Activated CD4-positive, alpha-beta T cell treated with anti-CD3 and anti-CD28 coated beads for 36 hours (primary cell): ENCODE measurements at regions of chr16 and their contacts with region 1.

Region 1: GRCh38 chr16:84738255-84739038 is 38.6 kb downstream of the USP10 start:
- DNase-seq: peak; percentile 85
- ATAC-seq: peak; percentile 79
- H3K4me3 Mint-ChIP-seq: no peak overlapping the region
- H3K27ac Mint-ChIP-seq: peak overlapping the region; percentile 42
- H3K4me1 Mint-ChIP-seq: peaks cover 59% of the 10 kb centered on the region
- H3K27me3 Mint-ChIP-seq: no peaks in the 10 kb centered on the region

Region 2: DNA sequence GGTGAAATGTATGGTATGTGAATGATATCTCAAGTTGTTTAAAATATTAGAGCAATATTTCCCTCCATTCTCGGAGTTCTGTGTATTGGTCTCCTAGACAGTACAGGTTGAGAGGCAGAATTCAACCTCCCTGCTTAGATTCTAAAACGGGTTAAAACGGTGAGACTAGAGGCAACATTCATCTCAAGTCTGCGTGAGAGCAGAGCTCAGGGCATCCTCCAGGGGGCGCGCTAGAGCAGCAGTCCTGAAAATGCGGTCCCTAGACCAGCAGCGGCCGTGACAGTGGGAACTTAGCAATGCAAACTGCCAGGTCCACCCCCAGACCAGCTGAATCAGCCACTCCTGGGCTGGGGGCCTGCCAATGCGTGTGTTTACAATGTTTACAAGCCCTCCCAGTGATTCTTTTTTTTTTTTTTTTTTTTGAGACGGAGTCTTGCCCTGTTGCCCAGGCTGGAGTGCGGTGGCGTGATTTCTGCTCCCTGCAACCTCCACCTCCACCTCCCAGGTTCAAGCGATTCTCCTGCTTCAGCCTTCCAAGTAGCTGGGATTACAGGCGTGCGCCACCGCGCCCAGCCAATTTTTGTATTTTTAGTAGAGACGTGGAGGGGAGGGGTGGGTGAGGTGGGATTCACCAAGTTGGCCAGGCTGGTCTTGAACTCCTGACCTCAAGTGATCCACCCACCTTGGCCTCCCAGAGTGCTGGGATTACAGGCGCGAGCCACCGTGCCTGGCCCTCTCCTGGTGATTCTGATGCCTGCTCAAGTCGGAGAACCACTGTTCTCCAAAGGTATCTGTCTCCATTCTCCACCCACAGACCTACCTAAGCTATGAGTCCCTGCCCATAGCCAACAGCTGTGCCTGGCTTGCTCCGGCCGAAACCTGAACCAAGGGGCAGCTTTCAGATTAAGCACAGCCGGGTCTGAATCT is 65.9 kb before region 1 on chr16:
- CTCF ChIA-PET with region 1: interaction called, 26 read pairs
- POLR2A ChIA-PET with region 1: no interaction called
- intact Hi-C with region 1: loop called (anchors 1 kb)
- DNase-seq: peak; percentile 91
- ATAC-seq: peak; percentile 96
- H3K4me3 Mint-ChIP-seq: no peak overlapping the region
- H3K27ac Mint-ChIP-seq: no peak overlapping the region
- H3K4me1 Mint-ChIP-seq: peaks cover 7% of the 10 kb centered on the region
- H3K27me3 Mint-ChIP-seq: peaks cover 3% of the 10 kb centered on the region

Region 3: GRCh38 chr16:84714028-84714427 is 24.4 kb before region 1 on chr16:
- CTCF ChIA-PET with region 1: interaction called, 11 read pairs
- POLR2A ChIA-PET with region 1: no interaction called
- intact Hi-C with region 1: no loop called
- DNase-seq: no peak
- ATAC-seq: no peak
- H3K4me3 Mint-ChIP-seq: no peak overlapping the region
- H3K27ac Mint-ChIP-seq: no peak overlapping the region
- H3K4me1 Mint-ChIP-seq: peaks cover 67% of the 10 kb centered on the region
- H3K27me3 Mint-ChIP-seq: no peaks in the 10 kb centered on the region

Region 4: DNA sequence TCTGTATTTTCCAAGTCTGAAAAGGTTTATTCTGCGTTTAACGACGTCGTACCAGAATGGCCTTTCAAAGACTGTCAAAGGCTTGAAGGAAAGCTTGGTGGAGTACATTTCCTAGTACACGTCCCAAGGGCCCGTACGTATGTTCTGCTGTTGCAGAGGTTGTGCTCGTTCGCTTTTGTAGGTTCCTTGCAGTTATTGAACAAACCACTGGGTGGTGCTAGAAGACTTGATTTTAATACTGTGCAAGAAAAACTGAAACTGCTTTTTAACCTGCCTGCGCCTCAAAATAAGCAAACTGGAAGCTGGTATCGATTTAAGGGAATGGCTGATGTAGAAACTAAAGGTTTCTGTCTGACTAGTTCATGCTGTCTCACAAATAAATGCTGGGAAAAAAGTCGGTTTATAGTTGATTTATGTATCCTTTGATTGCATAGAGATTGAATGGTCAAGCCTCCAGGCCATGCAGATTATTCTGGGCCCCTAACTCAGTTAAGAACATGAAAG is 16.0 kb after region 1 on chr16:
- CTCF ChIA-PET with region 1: interaction called, 74 read pairs
- POLR2A ChIA-PET with region 1: no interaction called
- intact Hi-C with region 1: no loop called
- DNase-seq: peak; percentile 76
- ATAC-seq: peak; percentile 78
- H3K4me3 Mint-ChIP-seq: no peak overlapping the region
- H3K27ac Mint-ChIP-seq: peak overlapping the region; percentile 49
- H3K4me1 Mint-ChIP-seq: peaks cover 84% of the 10 kb centered on the region
- H3K27me3 Mint-ChIP-seq: no peaks in the 10 kb centered on the region

Region 5: GRCh38 chr16:84970447-84971127 is 232.1 kb after region 1 on chr16:
- CTCF ChIA-PET with region 1: interaction called, 34 read pairs
- POLR2A ChIA-PET with region 1: no interaction called
- intact Hi-C with region 1: loop called (anchors 1 kb)
- DNase-seq: peak; percentile 91
- ATAC-seq: peak; percentile 99
- H3K4me3 Mint-ChIP-seq: no peak overlapping the region
- H3K27ac Mint-ChIP-seq: no peak overlapping the region
- H3K4me1 Mint-ChIP-seq: peaks cover 4% of the 10 kb centered on the region
- H3K27me3 Mint-ChIP-seq: no peaks in the 10 kb centered on the region